Astrocyte of the cerebellum (primary cell): ENCODE measurements at regions of chr17 and their contacts with region 1.

Region 1: DNA sequence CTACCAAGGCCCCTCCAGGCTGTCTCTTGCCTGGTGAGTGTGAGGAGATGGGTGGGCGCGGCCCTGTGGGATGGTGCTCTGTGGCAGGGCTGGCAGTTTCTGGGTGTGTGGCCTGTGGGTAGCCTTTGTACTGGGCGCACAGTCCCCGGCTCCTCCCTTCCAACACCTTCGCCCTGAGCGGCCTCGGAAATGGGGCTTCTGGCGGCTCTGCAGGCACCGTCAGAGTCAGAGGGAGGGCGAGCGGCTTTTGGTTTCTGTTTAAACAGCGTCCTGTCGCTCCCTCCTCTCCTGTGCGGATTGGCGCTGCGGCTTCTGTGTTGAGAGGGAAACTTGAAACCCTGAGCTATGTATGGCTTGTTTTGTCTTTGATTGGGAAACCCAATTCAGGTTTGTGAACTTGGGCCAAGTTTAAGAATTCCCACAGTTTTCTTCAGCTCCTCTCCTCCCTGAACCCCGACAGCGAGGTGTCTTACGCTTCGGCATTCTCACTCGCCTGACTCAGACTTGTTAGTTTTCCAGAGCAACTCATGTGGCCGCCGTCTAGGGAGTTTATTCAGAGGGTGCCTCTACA is 8.3 kb upstream of the ZNF750 start:
- DNase-seq: peak; percentile 28
- H3K4me3 ChIP-seq: no peak overlapping the region
- CTCF ChIP-seq: no peak

Region 2: GRCh38 chr17:82888691-82889495 is 40.8 kb after region 1 on chr17:
- in situ Hi-C with region 1: loop called (anchors 5 kb)
- DNase-seq: no peak
- H3K4me3 ChIP-seq: no peak overlapping the region
- CTCF ChIP-seq: no peak

Region 3: GRCh38 chr17:82931699-82932517 is 83.8 kb after region 1 on chr17:
- in situ Hi-C with region 1: no loop called
- DNase-seq: peak; percentile 74
- H3K4me3 ChIP-seq: no peak overlapping the region
- CTCF ChIP-seq: no peak